Posterior cingulate gyrus (tissue), 11 donors: ENCODE measurements at regions of chr3 and their contacts with region 1.

Region 1: DNA sequence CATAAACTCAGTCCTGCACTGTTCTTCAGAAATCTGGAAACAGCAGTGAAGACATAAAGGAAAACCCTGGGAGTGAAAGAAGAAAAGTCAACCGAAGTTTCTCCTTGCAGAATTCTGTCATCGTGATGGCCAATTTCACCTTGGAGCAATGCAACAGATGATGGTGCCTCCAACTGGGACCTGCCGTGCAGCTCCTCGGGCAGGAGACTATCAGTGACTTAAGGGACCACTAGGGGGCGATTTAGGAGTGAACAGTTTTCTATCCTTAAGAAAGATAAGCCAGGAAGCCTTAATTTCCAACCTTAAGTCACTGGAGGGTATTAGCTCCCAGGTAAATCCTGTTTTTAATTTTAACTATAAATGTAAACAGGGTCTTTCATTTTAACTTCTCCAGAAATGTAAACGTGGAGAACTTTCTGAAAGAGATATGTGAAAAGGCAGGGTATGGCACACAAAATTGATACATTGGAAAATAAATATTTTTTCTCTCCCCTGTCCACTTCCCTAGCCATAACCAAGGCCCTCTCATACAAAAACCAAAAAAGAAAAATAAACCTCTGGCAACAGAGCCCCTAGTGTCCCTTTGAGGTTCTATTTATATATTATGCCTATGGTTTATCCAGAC is 116.3 kb downstream of the PDZRN3 start:
- DNase-seq: peak in 4 of 10 donors; percentile 45 to 88 (median 53)

Region 2: DNA sequence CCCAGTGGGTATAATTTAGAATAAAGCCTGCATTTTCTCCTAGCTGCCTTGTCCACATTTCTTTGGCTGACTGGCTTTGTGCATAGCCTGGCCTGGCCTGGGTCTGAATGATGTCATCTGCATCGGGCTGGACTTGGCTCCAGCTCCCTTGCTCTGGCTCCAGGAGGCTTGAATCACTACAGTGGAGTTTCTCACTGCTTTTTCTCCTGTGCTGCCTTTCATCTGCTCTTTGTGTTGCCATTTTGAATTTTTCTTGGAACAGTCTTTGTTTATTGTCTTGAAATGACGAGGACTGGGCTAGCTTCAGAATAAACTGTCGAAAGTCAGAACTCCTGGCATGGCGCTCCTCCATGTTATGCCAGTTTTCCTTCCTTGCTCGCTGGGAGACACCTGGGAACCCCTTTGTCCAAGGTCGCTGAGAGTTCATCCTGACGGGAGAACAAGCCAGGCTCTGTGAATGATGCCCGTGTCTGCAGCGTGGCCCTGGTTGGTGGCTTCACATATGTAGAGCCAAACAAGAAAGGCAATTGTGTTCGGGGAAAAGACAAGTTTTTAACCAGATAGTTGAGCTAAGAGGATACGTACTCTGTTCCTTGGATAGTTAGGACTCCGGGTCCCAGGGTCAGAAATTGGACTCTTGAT is 142.6 kb before region 1 on chr3:
- intact Hi-C with region 1: no loop called
- DNase-seq: peak in 9 of 10 donors; percentile 33 to 94 (median 61)

Region 3: GRCh38 chr3:73552719-73553118 is 44.3 kb after region 1 on chr3:
- intact Hi-C with region 1: no loop called
- DNase-seq: no peak

Region 4: GRCh38 chr3:73624821-73625665 is 116.6 kb after region 1 on chr3 and contains the start of gene PDZRN3:
- intact Hi-C with region 1: loop called (anchors 10 kb)
- DNase-seq: peak in 9 of 10 donors; percentile 31 to 88 (median 56)

Region 5: GRCh38 chr3:73768524-73769308 is 260.3 kb after region 1 on chr3:
- intact Hi-C with region 1: loop called (anchors 1 kb)
- DNase-seq: no peak